ENCODE measurements at regions of chr5 and their contacts with region 1.

Region 1: DNA sequence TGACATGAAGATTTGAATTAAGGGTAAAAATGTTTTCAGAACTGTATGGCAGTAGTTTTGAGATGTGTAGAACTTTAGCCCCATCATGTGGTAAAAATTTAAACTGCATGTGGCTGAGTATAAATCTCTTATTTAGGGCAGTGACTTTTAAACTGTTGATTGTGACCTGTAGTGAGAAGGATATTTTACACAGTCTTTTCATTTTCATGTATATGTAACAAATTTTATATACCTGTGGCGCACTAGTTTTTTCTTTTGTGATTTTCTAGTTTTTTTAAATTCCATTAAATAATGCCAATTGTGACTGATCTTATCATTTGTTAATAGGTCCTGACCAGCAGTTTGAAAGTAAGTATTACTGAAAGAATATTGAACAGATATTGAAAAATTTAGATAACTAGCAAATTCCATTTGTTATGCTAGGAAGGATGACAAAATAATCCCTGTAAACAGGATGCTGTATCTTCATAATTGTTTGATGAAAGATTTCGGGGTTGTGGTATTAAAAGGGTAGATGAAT is 47.2 kb downstream of the GPBP1 start:
- DNase-seq: no peak
- H3K4me3 ChIP-seq: no peak overlapping the region
- H3K27ac ChIP-seq: peak overlapping the region in 2 of 4 donors; percentile 13 to 38
- H3K4me1 ChIP-seq: peaks cover 3 to 10% (median 5%) of the 10 kb centered on the region in 4 donors
- H3K27me3 ChIP-seq: no peaks in the 10 kb centered on the region
- CTCF ChIP-seq: peak; percentile 81 to 97 (median 95)
- EP300 ChIP-seq: no peak
- POLR2A ChIP-seq: no peak

Region 2: GRCh38 chr5:56270568-56271392 is 950.3 kb before region 1 on chr5:
- in situ Hi-C with region 1: loop called in 1 of 4 experiments (anchors 25 kb)
- intact Hi-C with region 1: no loop called
- DNase-seq: peak; percentile 81
- H3K4me3 ChIP-seq: no peak overlapping the region
- H3K27ac ChIP-seq: no peak overlapping the region
- H3K4me1 ChIP-seq: peaks cover 0 to 3% (median 0%) of the 10 kb centered on the region in 4 donors
- H3K27me3 ChIP-seq: no peaks in the 10 kb centered on the region
- CTCF ChIP-seq: peak; percentile 94 to 97 (median 95)
- EP300 ChIP-seq: no peak
- POLR2A ChIP-seq: no peak

Region 3: DNA sequence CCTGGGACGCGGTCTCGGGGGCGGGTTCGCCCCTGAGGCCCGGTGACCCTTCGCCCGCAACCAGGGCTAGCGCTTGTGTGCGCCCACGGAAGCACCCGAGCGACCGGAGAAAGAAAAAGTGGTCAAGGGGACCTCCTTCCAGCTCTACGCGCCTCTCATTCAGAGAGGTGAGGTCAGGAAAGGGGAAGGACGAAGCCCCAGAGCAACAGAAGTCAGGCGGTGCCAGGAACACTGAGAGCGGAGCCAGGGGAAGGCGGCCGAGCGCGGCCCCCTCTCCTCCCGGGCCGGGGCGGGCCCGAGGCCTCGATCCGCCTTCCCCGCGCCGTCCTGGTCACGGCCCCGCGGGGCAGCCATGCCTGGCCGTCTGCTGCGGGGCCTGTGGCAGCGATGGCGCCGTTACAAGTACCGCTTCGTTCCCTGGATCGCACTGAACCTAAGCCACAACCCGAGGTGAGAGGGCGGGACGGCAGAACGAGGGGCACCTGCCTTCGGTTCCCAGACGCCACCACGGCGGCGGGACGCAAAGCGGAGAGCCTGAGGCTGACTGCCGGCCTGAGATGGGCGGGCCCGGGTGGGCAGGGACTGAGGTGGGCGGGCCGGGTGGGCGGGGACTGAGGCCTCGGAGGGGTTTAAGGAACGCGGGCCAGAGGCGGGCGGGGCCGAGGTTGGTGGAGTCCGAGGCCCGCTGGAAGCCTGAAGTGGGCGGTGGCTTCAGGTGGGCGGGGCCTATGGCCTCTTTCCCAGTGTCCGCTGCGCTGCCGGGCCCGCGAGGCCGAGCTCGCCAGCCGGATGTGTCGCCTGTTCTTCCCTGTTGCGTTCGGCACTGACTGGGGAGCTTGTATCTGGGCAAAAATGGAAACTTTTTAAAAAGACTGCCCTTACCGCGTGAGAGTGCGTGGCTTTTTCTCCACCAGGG is 311.6 kb before region 1 on chr5 and contains the start of gene SETD9:
- in situ Hi-C with region 1: loop called in 3 of 4 experiments (anchors 5 to 25 kb)
- intact Hi-C with region 1: loop called (anchors 2 kb)
- DNase-seq: peak; percentile 99
- H3K4me3 ChIP-seq: peak within 1 kb of the TSS; percentile 65 to 88 (median 73)
- H3K27ac ChIP-seq: peak within 1 kb of the TSS; percentile 96 to 99 (median 98)
- H3K4me1 ChIP-seq: peaks cover 11 to 17% (median 12%) of the 10 kb centered on the region in 4 donors
- H3K27me3 ChIP-seq: no peaks in the 10 kb centered on the region
- CTCF ChIP-seq: no peak
- EP300 ChIP-seq: no peak
- POLR2A ChIP-seq: peak; percentile 89
- total RNA-seq, gene SETD9: 26.6 to 27.9 TPM in 2 of 4 donors, not detected in the others

Region 4: GRCh38 chr5:57137401-57137800 is 83.7 kb before region 1 on chr5:
- in situ Hi-C with region 1: loop called in 1 of 4 experiments (anchors 5 kb)
- intact Hi-C with region 1: no loop called
- DNase-seq: no peak
- H3K4me3 ChIP-seq: no peak overlapping the region
- H3K27ac ChIP-seq: no peak overlapping the region
- H3K4me1 ChIP-seq: no peaks in the 10 kb centered on the region
- H3K27me3 ChIP-seq: no peaks in the 10 kb centered on the region
- CTCF ChIP-seq: no peak
- EP300 ChIP-seq: no peak
- POLR2A ChIP-seq: no peak

Measured in transverse colon (tissue), 4 donors.